Heart right ventricle (tissue), 16 donors: ENCODE measurements at regions of chr5 and their contacts with region 1.

Region 1: GRCh38 chr5:58875599-58875998 is 292.7 kb downstream of the RAB3C start:
- DNase-seq: no peak
- ATAC-seq: no peak
- H3K4me3 ChIP-seq: no peak overlapping the region
- H3K27ac ChIP-seq: no peak overlapping the region
- H3K4me1 ChIP-seq: no peaks in the 10 kb centered on the region
- H3K27me3 ChIP-seq: peaks cover 0 to 15% (median 4%) of the 10 kb centered on the region in 7 donors
- CTCF ChIP-seq: no peak

Region 2: GRCh38 chr5:58708456-58708855 is 167.1 kb before region 1 on chr5:
- intact Hi-C with region 1: no loop called
- DNase-seq: no peak
- ATAC-seq: no peak
- H3K4me3 ChIP-seq: no peak overlapping the region
- H3K27ac ChIP-seq: no peak overlapping the region
- H3K4me1 ChIP-seq: no peaks in the 10 kb centered on the region
- H3K27me3 ChIP-seq: no peaks in the 10 kb centered on the region
- CTCF ChIP-seq: no peak

Region 3: DNA sequence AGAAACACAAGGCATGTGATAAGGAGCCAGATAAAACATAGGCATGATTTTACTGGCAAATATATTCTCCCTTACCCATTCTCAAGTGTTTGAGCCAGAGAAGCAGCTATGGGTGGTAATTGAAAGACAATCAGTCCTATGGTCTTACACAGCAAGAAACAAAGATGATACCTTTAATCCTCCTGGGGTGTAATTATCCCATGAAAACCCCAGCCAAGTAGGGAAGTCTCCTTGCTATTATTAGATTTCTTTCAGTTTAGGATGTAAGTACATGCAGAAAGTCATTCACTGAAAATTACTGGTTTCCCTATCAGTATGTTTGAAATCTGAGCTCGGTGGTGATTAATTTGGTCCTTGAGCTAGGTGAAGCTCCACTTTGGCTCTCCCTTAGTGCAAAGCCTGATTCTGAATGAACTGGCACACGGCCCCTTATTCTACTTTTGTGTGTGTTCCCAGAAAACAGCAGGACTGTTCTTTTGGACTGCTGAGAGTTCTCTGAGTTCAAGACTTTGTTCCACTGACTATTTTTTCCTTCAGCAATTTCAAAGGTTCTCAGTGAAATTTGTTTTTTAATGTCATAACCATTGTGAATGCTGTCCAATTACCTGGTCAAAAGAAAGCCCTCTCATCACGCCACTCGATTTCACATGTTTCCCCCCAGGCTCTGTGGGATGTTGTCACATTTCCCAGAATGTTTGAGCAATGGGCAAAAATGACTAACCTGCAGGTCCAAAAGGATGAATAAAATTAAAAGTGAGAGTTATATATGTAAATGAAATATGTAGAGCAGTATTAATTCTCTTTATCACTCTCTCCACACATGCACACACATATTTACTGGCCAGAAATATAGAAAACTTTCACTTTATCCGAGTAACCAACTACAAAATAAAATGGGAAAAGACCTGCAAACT is 50.3 kb after region 1 on chr5:
- intact Hi-C with region 1: loop called in 1 of 10 experiments (anchors 5 kb)
- DNase-seq: no peak
- ATAC-seq: no peak
- H3K4me3 ChIP-seq: no peak overlapping the region
- H3K27ac ChIP-seq: no peak overlapping the region
- H3K4me1 ChIP-seq: peaks cover 0 to 47% (median 18%) of the 10 kb centered on the region in 9 donors
- H3K27me3 ChIP-seq: no peaks in the 10 kb centered on the region
- CTCF ChIP-seq: no peak